K562 (cell line): ENCODE measurements at regions of chr10 and their contacts with region 1.

Region 1: DNA sequence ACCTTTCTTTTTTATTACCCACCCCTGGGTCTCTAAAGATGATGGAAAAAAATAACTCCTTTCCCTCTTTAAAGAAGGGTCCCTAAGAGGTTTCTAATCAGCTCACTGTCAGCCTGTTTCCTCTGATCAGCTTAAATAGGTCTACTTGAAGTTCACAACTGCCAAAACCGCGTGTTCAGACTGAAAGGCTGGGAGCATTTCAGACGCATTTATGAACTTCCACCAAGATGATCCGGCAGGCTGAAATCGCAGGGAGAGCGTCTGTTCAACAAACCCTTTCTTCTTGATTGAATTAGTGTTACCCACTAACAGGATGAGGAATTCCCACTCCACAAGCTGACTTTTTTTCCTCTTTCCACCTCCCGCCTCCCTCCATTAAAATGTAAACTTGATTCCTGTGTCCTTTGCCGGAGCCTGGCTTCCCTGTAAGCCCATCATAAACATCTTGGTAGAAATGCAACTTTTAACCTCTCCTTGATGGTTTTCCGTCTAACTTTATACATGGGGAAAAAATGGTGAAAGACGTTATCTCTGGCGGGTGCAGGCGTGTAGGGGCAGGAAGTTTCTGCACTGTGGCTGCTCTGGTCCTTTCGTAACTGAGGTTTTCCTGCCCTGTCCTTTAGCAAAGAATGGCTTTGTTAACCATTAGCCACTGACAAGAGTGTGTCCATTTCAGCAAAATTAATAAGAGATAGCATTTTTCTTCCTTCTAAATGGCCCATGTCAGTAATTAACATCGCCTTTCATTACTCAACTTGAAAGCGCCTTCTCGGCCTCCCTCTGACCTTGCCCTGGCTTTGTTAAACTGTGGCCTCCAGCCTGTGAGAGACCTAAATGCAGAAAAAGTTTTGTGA is 130.7 kb downstream of the BAMBI start:
- DNase-seq: peak in 3 of 4 experiments; percentile 26 to 85 (median 61)
- ATAC-seq: peak; percentile 50
- H3K4me3 ChIP-seq: peak overlapping the region; percentile 5; the same call in 1 of the 2 replicates
- H3K27ac ChIP-seq: peak overlapping the region; percentile 98
- H3K4me1 ChIP-seq: peaks cover 41 to 74% of the 10 kb centered on the region in 2 experiments
- H3K27me3 ChIP-seq: no peaks in the 10 kb centered on the region
- CTCF ChIP-seq: no peak
- EP300 ChIP-seq: no peak; the same call in 1 of the 2 replicates
- POLR2A ChIP-seq: peak; percentile 59
- RAD21 ChIP-seq: no peak

Region 2: GRCh38 chr10:28796606-28797512 is 11.1 kb before region 1 on chr10:
- CTCF ChIA-PET with region 1: no interaction called
- POLR2A ChIA-PET with region 1: interaction called, 19 read pairs
- in situ Hi-C with region 1: no loop called
- intact Hi-C with region 1: no loop called
- DNase-seq: peak; percentile 43 to 91 (median 56)
- ATAC-seq: peak; percentile 87
- H3K4me3 ChIP-seq: no peak overlapping the region
- H3K27ac ChIP-seq: no peak overlapping the region
- H3K4me1 ChIP-seq: peaks cover 11 to 16% of the 10 kb centered on the region in 2 experiments; a peak in 4 of 5 replicates
- H3K27me3 ChIP-seq: no peaks in the 10 kb centered on the region
- CTCF ChIP-seq: no peak
- EP300 ChIP-seq: peak; percentile 47; the same call in 1 of the 2 replicates
- POLR2A ChIP-seq: no peak
- RAD21 ChIP-seq: no peak

Region 3: GRCh38 chr10:28822719-28823464 is 14.9 kb after region 1 on chr10:
- CTCF ChIA-PET with region 1: no interaction called
- POLR2A ChIA-PET with region 1: interaction called, 5 read pairs
- in situ Hi-C with region 1: no loop called
- intact Hi-C with region 1: loop called (anchors 1 kb)
- DNase-seq: peak; percentile 79 to 93 (median 83)
- ATAC-seq: peak; percentile 91
- H3K4me3 ChIP-seq: peak overlapping the region; percentile 16; the same call in 1 of the 2 replicates
- H3K27ac ChIP-seq: peak overlapping the region; percentile 85
- H3K4me1 ChIP-seq: peaks cover 3 to 36% of the 10 kb centered on the region in 2 experiments
- H3K27me3 ChIP-seq: no peaks in the 10 kb centered on the region
- CTCF ChIP-seq: no peak
- EP300 ChIP-seq: peak; percentile 78; the same call in 1 of the 2 replicates
- POLR2A ChIP-seq: peak; percentile 52
- RAD21 ChIP-seq: 0 out of 4 replicates have a peak, but pooled peaks of 1 of the 2 experiments have one; percentile 29

Region 4: GRCh38 chr10:28839600-28840007 is 31.6 kb after region 1 on chr10:
- CTCF ChIA-PET with region 1: no interaction called
- POLR2A ChIA-PET with region 1: interaction called, 6 read pairs
- in situ Hi-C with region 1: no loop called
- intact Hi-C with region 1: loop called (anchors 2 kb)
- DNase-seq: peak; percentile 24 to 94 (median 54)
- ATAC-seq: peak; percentile 88
- H3K4me3 ChIP-seq: no peak overlapping the region
- H3K27ac ChIP-seq: peak overlapping the region; percentile 87
- H3K4me1 ChIP-seq: peaks cover 7 to 48% of the 10 kb centered on the region in 2 experiments
- H3K27me3 ChIP-seq: no peaks in the 10 kb centered on the region
- CTCF ChIP-seq: no peak
- EP300 ChIP-seq: peak; percentile 97
- POLR2A ChIP-seq: no peak
- RAD21 ChIP-seq: peak in 1 of 2 experiments; percentile 18; a peak in 1 of 4 replicates

Region 5: GRCh38 chr10:28875549-28876081 is 67.6 kb after region 1 on chr10:
- CTCF ChIA-PET with region 1: no interaction called
- POLR2A ChIA-PET with region 1: no interaction called
- in situ Hi-C with region 1: no loop called
- intact Hi-C with region 1: loop called (anchors 5 kb)
- DNase-seq: no peak
- ATAC-seq: no peak
- H3K4me3 ChIP-seq: no peak overlapping the region
- H3K27ac ChIP-seq: no peak overlapping the region
- H3K4me1 ChIP-seq: peaks cover 0 to 3% of the 10 kb centered on the region in 2 experiments; a peak in 1 of 5 replicates
- H3K27me3 ChIP-seq: no peaks in the 10 kb centered on the region
- CTCF ChIP-seq: no peak
- EP300 ChIP-seq: no peak
- POLR2A ChIP-seq: no peak
- RAD21 ChIP-seq: no peak